ENCODE measurements at regions of chr9 and their contacts with region 1.

Region 1: DNA sequence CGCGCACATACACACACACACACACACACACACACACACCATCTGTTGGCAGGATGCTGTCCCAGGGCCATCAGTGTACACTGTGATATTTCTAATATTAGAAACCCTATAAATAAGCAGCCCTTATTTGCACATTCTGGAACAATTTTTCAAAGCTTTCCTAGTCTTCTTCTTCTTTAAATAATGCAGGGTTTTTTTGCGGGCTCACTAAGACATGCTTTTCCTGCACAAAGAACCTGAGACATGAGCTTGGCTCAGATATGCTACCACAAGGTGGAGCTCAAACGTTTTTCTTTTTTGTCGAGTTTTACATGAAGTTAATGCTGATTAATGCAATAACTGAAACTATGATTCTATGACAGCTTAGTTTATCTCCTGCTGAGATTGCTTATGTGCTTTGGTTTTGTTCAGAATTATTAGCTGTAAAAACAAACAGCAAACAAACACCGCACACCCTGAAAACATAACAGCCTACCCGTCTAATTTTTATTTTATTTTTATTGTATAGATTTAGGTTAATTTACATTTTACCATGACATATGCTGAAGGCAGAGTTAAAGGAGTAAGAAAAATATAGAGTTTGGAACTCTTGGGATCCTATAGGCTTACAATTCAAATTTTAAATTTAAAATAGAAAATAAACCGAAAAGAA is 95.8 kb downstream of the ALDH1A1 start:
- DNase-seq: peak; percentile 42 to 58
- H3K4me3 ChIP-seq: no peak overlapping the region
- H3K27ac ChIP-seq: peak overlapping the region; percentile 80
- H3K4me1 ChIP-seq: peaks cover 16% of the 10 kb centered on the region
- H3K27me3 ChIP-seq: no peaks in the 10 kb centered on the region
- CTCF ChIP-seq: peak; percentile 77

Region 2: DNA sequence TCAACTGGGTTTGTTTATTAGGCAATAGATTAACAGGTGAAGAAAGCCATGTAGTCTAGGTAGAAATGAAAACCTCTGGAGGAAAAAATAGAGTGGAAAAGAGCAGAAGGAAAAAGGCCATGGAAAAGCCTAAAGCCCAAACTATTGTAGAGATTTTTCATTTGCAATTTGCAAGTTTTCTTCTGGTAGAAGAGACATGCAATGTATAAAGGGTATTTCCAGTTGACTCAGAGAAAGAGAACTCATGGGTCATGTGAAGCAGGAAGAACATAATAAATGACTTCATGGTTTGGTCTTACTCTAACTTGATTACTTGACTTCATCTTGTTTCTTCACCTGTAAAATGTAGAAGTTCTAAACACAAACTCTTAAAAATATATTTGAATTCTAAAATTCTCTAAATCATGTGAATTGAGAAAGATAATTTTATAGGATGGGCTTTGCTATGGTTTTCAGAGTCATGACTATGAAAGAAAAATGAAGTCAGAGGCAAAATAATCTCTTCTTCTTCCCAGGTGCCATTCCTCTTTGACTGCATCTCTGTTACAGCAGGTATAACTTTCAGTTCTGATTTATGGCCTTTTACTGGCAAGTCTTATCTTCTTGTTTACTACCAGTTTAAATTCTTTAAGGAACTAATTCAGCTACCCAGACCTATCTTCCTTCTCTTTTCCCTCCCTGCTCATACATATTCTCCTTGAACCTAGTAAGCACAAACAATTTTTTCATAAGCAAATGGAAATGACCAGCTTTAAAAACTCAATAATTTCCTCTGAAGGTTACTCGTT is 383.4 kb before region 1 on chr9:
- CTCF ChIA-PET with region 1: no interaction called
- POLR2A ChIA-PET with region 1: interaction called, 10 read pairs
- intact Hi-C with region 1: no loop called
- DNase-seq: no peak
- H3K4me3 ChIP-seq: no peak overlapping the region
- H3K27ac ChIP-seq: no peak overlapping the region
- H3K4me1 ChIP-seq: peaks cover 31% of the 10 kb centered on the region
- H3K27me3 ChIP-seq: no peaks in the 10 kb centered on the region
- CTCF ChIP-seq: no peak

Region 3: GRCh38 chr9:72843520-72844439 is 13.3 kb before region 1 on chr9:
- CTCF ChIA-PET with region 1: interaction called, 15 read pairs
- POLR2A ChIA-PET with region 1: interaction called, 8 read pairs
- intact Hi-C with region 1: no loop called
- DNase-seq: peak in 1 of 2 experiments; percentile 43
- H3K4me3 ChIP-seq: no peak overlapping the region
- H3K27ac ChIP-seq: peak overlapping the region; percentile 40; the same call in 1 of the 2 replicates
- H3K4me1 ChIP-seq: peaks cover 18% of the 10 kb centered on the region
- H3K27me3 ChIP-seq: no peaks in the 10 kb centered on the region
- CTCF ChIP-seq: peak; percentile 44; the same call in 1 of the 2 replicates

Region 4: DNA sequence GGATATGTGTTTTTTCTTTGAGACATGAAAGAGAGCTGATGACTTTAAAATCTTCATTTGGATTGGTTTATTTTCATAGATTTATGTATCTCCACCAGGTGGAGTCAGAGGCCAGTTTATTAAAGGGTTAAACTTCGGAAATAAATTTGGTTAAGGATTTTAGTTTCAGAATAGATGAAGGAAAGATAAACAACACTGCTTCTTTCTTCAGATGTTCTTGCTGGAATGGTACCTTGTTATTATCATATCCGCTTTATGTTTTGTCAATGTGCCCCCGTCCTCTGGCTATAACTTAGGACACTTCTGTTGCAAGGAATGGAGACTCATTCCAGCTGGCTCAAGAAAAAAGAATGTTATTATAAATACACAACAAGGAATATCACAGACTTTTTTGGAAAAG is 14.6 kb after region 1 on chr9:
- CTCF ChIA-PET with region 1: interaction called, 7 read pairs
- POLR2A ChIA-PET with region 1: interaction called, 12 read pairs
- intact Hi-C with region 1: no loop called
- DNase-seq: no peak
- H3K4me3 ChIP-seq: no peak overlapping the region
- H3K27ac ChIP-seq: no peak overlapping the region
- H3K4me1 ChIP-seq: no peaks in the 10 kb centered on the region
- H3K27me3 ChIP-seq: no peaks in the 10 kb centered on the region
- CTCF ChIP-seq: peak; percentile 73

Measured in PC-9 (cell line).